Activated CD4-positive, alpha-beta T cell treated with anti-CD3 and anti-CD28 coated beads for 36 hours (primary cell): ENCODE measurements at regions of chr2 and their contacts with region 1.

Region 1: GRCh38 chr2:112941753-112942658 is 31.0 kb downstream of the IL37 start:
- DNase-seq: peak; percentile 89
- ATAC-seq: peak; percentile 96
- H3K4me3 Mint-ChIP-seq: no peak overlapping the region
- H3K27ac Mint-ChIP-seq: no peak overlapping the region
- H3K4me1 Mint-ChIP-seq: no peaks in the 10 kb centered on the region
- H3K27me3 Mint-ChIP-seq: no peaks in the 10 kb centered on the region

Region 2: GRCh38 chr2:112726497-112727190 is 215.4 kb before region 1 on chr2:
- CTCF ChIA-PET with region 1: interaction called, 11 read pairs
- POLR2A ChIA-PET with region 1: no interaction called
- intact Hi-C with region 1: no loop called
- DNase-seq: peak; percentile 94
- ATAC-seq: peak; percentile 98
- H3K4me3 Mint-ChIP-seq: no peak overlapping the region
- H3K27ac Mint-ChIP-seq: no peak overlapping the region
- H3K4me1 Mint-ChIP-seq: peaks cover 3% of the 10 kb centered on the region
- H3K27me3 Mint-ChIP-seq: no peaks in the 10 kb centered on the region

Region 3: GRCh38 chr2:112764071-112765044 is 177.6 kb before region 1 on chr2 and contains the start of gene CKAP2L:
- CTCF ChIA-PET with region 1: interaction called, 12 read pairs
- POLR2A ChIA-PET with region 1: no interaction called
- intact Hi-C with region 1: no loop called
- DNase-seq: peak; percentile 98
- ATAC-seq: peak; percentile 97
- H3K4me3 Mint-ChIP-seq: peak within 1 kb of the TSS; percentile 96
- H3K27ac Mint-ChIP-seq: peak within 1 kb of the TSS; percentile 95
- H3K4me1 Mint-ChIP-seq: peaks cover 25% of the 10 kb centered on the region
- H3K27me3 Mint-ChIP-seq: no peaks in the 10 kb centered on the region
- total RNA-seq, gene CKAP2L: 38.4 to 46.7 TPM

Region 4: GRCh38 chr2:112924821-112925220 is 17.2 kb before region 1 on chr2:
- CTCF ChIA-PET with region 1: interaction called, 20 read pairs
- POLR2A ChIA-PET with region 1: no interaction called
- intact Hi-C with region 1: no loop called
- DNase-seq: no peak
- ATAC-seq: no peak
- H3K4me3 Mint-ChIP-seq: no peak overlapping the region
- H3K27ac Mint-ChIP-seq: no peak overlapping the region
- H3K4me1 Mint-ChIP-seq: no peaks in the 10 kb centered on the region
- H3K27me3 Mint-ChIP-seq: peaks cover 2% of the 10 kb centered on the region

Region 5: DNA sequence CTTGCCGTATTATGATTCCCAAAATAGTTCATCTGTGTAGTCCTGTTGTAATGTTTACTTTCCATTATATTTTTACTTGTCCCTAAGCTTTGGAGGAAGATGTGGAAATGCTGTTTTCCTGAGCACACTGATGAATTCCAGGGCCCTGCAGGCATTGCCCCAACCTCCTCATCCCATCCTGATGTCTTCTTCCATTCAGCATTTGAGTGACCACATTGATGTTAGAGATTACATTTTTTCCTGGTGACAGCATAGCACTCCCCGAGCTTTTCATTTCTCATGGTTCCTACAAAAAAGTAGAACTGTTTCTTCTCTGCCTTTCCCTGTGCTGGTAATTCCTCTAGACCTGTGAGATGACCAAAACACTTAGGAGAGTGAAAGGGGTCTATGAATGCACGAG is 68.1 kb after region 1 on chr2:
- CTCF ChIA-PET with region 1: no interaction called
- POLR2A ChIA-PET with region 1: no interaction called
- intact Hi-C with region 1: no loop called
- DNase-seq: no peak
- ATAC-seq: no peak
- H3K4me3 Mint-ChIP-seq: no peak overlapping the region
- H3K27ac Mint-ChIP-seq: no peak overlapping the region
- H3K4me1 Mint-ChIP-seq: peaks cover 4% of the 10 kb centered on the region
- H3K27me3 Mint-ChIP-seq: no peaks in the 10 kb centered on the region

Region 6: GRCh38 chr2:113050921-113051895 is 109.2 kb after region 1 on chr2:
- CTCF ChIA-PET with region 1: no interaction called
- POLR2A ChIA-PET with region 1: no interaction called
- intact Hi-C with region 1: no loop called
- DNase-seq: peak; percentile 21
- ATAC-seq: no peak
- H3K4me3 Mint-ChIP-seq: no peak overlapping the region
- H3K27ac Mint-ChIP-seq: no peak overlapping the region
- H3K4me1 Mint-ChIP-seq: peaks cover 5% of the 10 kb centered on the region
- H3K27me3 Mint-ChIP-seq: no peaks in the 10 kb centered on the region